ENCODE measurements at regions of chr19 and their contacts with region 1.

Region 1: GRCh38 chr19:28633319-28634018 is 579.5 kb downstream of the UQCRFS1 start:
- DNase-seq: peak; percentile 70
- ATAC-seq: peak; percentile 92
- H3K4me3 Mint-ChIP-seq: no peak overlapping the region
- H3K27ac Mint-ChIP-seq: no peak overlapping the region
- H3K4me1 Mint-ChIP-seq: peaks cover 16% of the 10 kb centered on the region
- H3K27me3 Mint-ChIP-seq: no peaks in the 10 kb centered on the region
- CTCF ChIP-seq: peak; percentile 93

Region 2: GRCh38 chr19:28466107-28467045 is 167.1 kb before region 1 on chr19:
- CTCF ChIA-PET with region 1: interaction called, 40 read pairs
- POLR2A ChIA-PET with region 1: no interaction called
- intact Hi-C with region 1: loop called (anchors 2 kb)
- DNase-seq: peak; percentile 84
- ATAC-seq: no peak
- H3K4me3 Mint-ChIP-seq: no peak overlapping the region
- H3K27ac Mint-ChIP-seq: no peak overlapping the region
- H3K4me1 Mint-ChIP-seq: peaks cover 24% of the 10 kb centered on the region
- H3K27me3 Mint-ChIP-seq: no peaks in the 10 kb centered on the region
- CTCF ChIP-seq: peak; percentile 77

Region 3: DNA sequence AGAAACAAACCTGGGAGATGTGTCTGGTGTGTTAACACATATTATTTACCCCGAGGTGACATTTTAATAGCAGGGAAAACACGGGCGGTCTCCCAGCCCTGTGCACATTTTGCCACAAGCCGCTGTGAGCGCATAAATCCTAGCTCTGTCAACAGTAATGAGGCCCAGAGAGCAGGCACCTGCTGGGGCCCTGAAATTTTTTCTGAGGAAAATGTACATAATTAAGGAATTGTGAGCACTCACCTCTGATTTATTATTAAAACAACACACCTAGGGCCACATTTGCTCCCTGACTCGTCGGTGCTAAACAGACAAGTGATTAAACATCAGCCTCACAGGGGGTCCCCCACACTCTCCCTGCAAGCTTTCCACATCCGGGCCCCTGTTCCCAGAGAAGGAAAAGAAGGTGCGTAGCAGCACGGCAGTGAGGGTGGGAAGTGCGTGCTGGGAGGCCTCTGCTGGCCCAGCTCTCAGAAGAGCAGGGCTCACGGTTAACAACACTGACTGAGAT is 36.9 kb before region 1 on chr19:
- CTCF ChIA-PET with region 1: no interaction called
- POLR2A ChIA-PET with region 1: no interaction called
- intact Hi-C with region 1: no loop called
- DNase-seq: no peak
- ATAC-seq: no peak
- H3K4me3 Mint-ChIP-seq: no peak overlapping the region
- H3K27ac Mint-ChIP-seq: no peak overlapping the region
- H3K4me1 Mint-ChIP-seq: no peaks in the 10 kb centered on the region
- H3K27me3 Mint-ChIP-seq: no peaks in the 10 kb centered on the region
- CTCF ChIP-seq: no peak

Region 4: DNA sequence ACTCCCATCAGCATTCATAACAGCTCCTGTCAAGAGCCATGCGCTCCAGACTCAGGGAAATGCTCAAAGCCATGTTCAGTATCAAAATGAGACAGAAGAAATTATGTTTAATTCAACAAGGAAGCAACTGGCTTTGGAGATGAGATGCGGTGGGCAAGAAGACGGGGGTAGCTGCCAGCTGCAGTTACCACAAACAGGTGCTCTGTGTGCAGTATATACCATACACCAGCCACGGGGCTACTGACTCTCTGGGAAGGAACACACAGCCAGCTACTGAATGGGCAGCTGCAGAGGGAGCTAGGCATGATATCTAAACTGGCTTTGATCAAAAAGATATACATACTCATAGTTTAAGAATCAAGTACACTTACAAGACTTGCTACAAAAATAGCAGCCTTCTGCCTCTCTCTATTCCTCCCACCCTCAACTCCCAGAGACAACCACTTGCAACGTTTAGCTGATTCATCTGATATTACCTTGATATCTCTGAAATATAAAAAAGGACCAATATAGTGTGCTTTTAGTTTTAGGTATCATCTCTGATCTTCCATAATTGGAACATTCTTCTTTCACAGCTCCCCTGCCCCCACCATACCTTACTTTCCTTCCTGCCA is 13.5 kb before region 1 on chr19:
- CTCF ChIA-PET with region 1: interaction called, 18 read pairs
- POLR2A ChIA-PET with region 1: no interaction called
- intact Hi-C with region 1: no loop called
- DNase-seq: no peak
- ATAC-seq: no peak
- H3K4me3 Mint-ChIP-seq: no peak overlapping the region
- H3K27ac Mint-ChIP-seq: no peak overlapping the region
- H3K4me1 Mint-ChIP-seq: no peaks in the 10 kb centered on the region
- H3K27me3 Mint-ChIP-seq: no peaks in the 10 kb centered on the region
- CTCF ChIP-seq: no peak

Region 5: GRCh38 chr19:28652765-28653164 is 19.3 kb after region 1 on chr19:
- CTCF ChIA-PET with region 1: interaction called, 11 read pairs
- POLR2A ChIA-PET with region 1: no interaction called
- intact Hi-C with region 1: no loop called
- DNase-seq: no peak
- ATAC-seq: no peak
- H3K4me3 Mint-ChIP-seq: no peak overlapping the region
- H3K27ac Mint-ChIP-seq: no peak overlapping the region
- H3K4me1 Mint-ChIP-seq: peaks cover 6% of the 10 kb centered on the region
- H3K27me3 Mint-ChIP-seq: peaks cover 2% of the 10 kb centered on the region
- CTCF ChIP-seq: no peak

Measured in activated CD8-positive, alpha-beta T cell treated with anti-CD3 and anti-CD28 coated beads for 36 hours (primary cell).